CD4-positive, alpha-beta T cell (primary cell): ENCODE measurements at regions of chr1 and their contacts with region 1.

Region 1: GRCh38 chr1:235128456-235129328 is at the start of gene TOMM20:
- DNase-seq: peak; percentile 86 to 99 (median 92)
- ATAC-seq: peak; percentile 91
- H3K4me3 ChIP-seq: peak within 1 kb of the TSS; percentile 86
- H3K4me3 Mint-ChIP-seq: peak within 1 kb of the TSS; percentile 98
- H3K27ac ChIP-seq: peak within 1 kb of the TSS; percentile 89 to 93
- H3K27ac Mint-ChIP-seq: peak within 1 kb of the TSS; percentile 98
- H3K4me1 ChIP-seq: peaks cover 38% of the 10 kb centered on the region
- H3K4me1 Mint-ChIP-seq: peaks cover 45% of the 10 kb centered on the region
- H3K27me3 ChIP-seq: no peaks in the 10 kb centered on the region
- H3K27me3 Mint-ChIP-seq: no peaks in the 10 kb centered on the region
- CTCF ChIP-seq: no peak
- total RNA-seq, gene TOMM20: 129 to 133 TPM

Region 2: DNA sequence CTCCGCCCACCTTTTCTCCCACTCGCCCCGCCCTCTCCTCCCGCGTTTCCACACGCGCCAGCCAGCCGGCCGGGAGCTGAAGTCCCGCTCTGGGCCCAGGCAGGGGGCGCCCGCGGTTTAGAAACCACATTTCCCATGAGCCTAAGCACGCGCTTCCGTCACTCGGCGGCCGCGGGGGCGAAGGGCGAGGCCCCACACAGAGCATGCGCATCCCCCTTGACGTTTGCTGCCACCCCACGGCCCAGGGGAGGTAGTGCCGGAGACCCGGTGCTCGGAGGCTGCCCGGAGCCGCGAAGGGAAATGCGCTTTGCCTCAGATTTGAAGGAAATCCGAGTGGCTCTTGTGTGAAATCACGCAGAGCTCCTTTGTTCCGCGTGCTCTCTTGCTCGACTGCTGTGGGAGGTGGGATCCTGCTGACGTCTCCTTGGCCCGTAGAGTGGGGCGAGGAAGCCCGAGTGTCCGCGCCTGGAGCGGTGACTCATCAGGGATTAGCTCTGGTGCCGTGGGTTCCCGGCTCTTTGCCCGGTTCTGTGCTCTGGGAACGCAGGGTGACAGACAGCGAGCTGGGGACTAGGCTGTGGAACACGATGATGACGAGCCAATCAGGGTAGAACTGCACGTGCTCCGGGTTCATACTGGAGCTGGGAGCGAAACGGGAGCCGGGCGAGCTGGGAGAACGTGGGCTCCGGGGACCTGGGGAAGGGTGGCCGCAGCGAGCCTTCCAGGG is 376.0 kb after region 1 on chr1:
- CTCF ChIA-PET with region 1: no interaction called
- POLR2A ChIA-PET with region 1: interaction called, 10 read pairs
- intact Hi-C with region 1: no loop called
- DNase-seq: peak; percentile 96 to 100 (median 98)
- ATAC-seq: peak; percentile 86
- H3K4me3 ChIP-seq: peak overlapping the region; percentile 79
- H3K4me3 Mint-ChIP-seq: peak overlapping the region; percentile 92
- H3K27ac ChIP-seq: peak overlapping the region; percentile 89 to 93
- H3K27ac Mint-ChIP-seq: peak overlapping the region; percentile 96
- H3K4me1 ChIP-seq: peaks cover 15% of the 10 kb centered on the region
- H3K4me1 Mint-ChIP-seq: peaks cover 20% of the 10 kb centered on the region
- H3K27me3 ChIP-seq: no peaks in the 10 kb centered on the region
- H3K27me3 Mint-ChIP-seq: no peaks in the 10 kb centered on the region
- CTCF ChIP-seq: peak; percentile 91

Region 3: GRCh38 chr1:236734141-236734765 is 1605.6 kb after region 1 on chr1:
- CTCF ChIA-PET with region 1: no interaction called
- POLR2A ChIA-PET with region 1: no interaction called
- intact Hi-C with region 1: no loop called
- DNase-seq: no peak
- ATAC-seq: no peak
- H3K4me3 ChIP-seq: no peak overlapping the region
- H3K4me3 Mint-ChIP-seq: no peak overlapping the region
- H3K27ac ChIP-seq: no peak overlapping the region
- H3K27ac Mint-ChIP-seq: no peak overlapping the region
- H3K4me1 ChIP-seq: no peaks in the 10 kb centered on the region
- H3K4me1 Mint-ChIP-seq: no peaks in the 10 kb centered on the region
- H3K27me3 ChIP-seq: no peaks in the 10 kb centered on the region
- H3K27me3 Mint-ChIP-seq: peaks cover 5% of the 10 kb centered on the region
- CTCF ChIP-seq: no peak